PC-3 (cell line): ENCODE measurements at regions of chr3 and their contacts with region 1.

Region 1: DNA sequence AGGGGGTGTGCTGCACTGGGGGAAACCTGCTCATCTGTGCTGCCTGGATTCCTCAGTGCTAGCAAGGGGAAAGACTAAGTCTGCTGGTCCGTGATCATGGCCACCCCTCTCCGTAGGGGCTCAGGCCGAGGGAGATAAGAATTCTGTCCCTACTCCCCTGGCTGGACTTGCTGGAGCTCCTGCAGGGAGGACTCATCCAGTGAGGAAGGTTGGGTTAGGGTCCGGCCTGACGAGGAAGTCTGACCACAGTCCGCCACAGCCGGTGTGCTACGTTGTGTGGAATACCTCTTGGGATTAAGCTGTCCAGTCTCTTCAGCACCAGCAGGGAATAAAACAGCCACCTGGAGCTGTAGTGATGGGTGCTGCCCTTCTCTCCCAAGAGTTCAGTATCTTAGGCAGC is 1309.1 kb upstream of the CADM2 start:
- DNase-seq: no peak
- ATAC-seq: no peak
- H3K4me3 ChIP-seq: no peak overlapping the region
- H3K27ac ChIP-seq: no peak overlapping the region
- H3K4me1 ChIP-seq: no peaks in the 10 kb centered on the region
- H3K27me3 ChIP-seq: no peaks in the 10 kb centered on the region
- CTCF ChIP-seq: no peak

Region 2: GRCh38 chr3:84825817-84826216 is 1176.1 kb after region 1 on chr3:
- CTCF ChIA-PET with region 1: no interaction called
- POLR2A ChIA-PET with region 1: interaction called, 15 read pairs
- intact Hi-C with region 1: no loop called
- DNase-seq: peak; percentile 23
- ATAC-seq: 0 out of 2 replicates have a peak, but pooled peaks have one; percentile 42
- H3K4me3 ChIP-seq: no peak overlapping the region
- H3K27ac ChIP-seq: no peak overlapping the region
- H3K4me1 ChIP-seq: peaks cover 13% of the 10 kb centered on the region
- H3K27me3 ChIP-seq: no peaks in the 10 kb centered on the region
- CTCF ChIP-seq: peak; percentile 51